PC-3 (cell line): ENCODE measurements at regions of chr19 and their contacts with region 1.

Region 1: GRCh38 chr19:11659612-11660011 is 62.3 kb downstream of the ZNF627 start:
- DNase-seq: peak; percentile 55
- ATAC-seq: no peak
- H3K4me3 ChIP-seq: no peak overlapping the region
- H3K27ac ChIP-seq: no peak overlapping the region
- H3K4me1 ChIP-seq: no peaks in the 10 kb centered on the region
- H3K27me3 ChIP-seq: no peaks in the 10 kb centered on the region
- CTCF ChIP-seq: peak; percentile 75

Region 2: GRCh38 chr19:11781295-11782052 is 121.9 kb after region 1 on chr19:
- CTCF ChIA-PET with region 1: no interaction called
- POLR2A ChIA-PET with region 1: no interaction called
- intact Hi-C with region 1: loop called (anchors 1 kb)
- DNase-seq: no peak
- ATAC-seq: no peak
- H3K4me3 ChIP-seq: peak overlapping the region; percentile 28; the same call in 1 of the 2 replicates
- H3K27ac ChIP-seq: no peak overlapping the region
- H3K4me1 ChIP-seq: no peaks in the 10 kb centered on the region
- H3K27me3 ChIP-seq: no peaks in the 10 kb centered on the region
- CTCF ChIP-seq: no peak